Endothelial cell of umbilical vein (primary cell): ENCODE measurements at regions of chr15 and their contacts with region 1.

Region 1: GRCh38 chr15:65028921-65029735 is at the start of gene MTFMT:
- DNase-seq: peak; percentile 80
- H3K4me3 ChIP-seq: peak within 1 kb of the TSS; percentile 70 to 81 (median 73)
- H3K27ac ChIP-seq: peak within 1 kb of the TSS; percentile 16
- H3K4me1 ChIP-seq: peaks cover 8% of the 10 kb centered on the region
- H3K27me3 ChIP-seq: no peaks in the 10 kb centered on the region
- CTCF ChIP-seq: no peak
- POLR2A ChIP-seq: peak; percentile 96
- total RNA-seq, gene MTFMT: 13.6 and 20.4 TPM in 2 replicates

Region 2: GRCh38 chr15:64895285-64896065 is 133.7 kb before region 1 on chr15:
- CTCF ChIA-PET with region 1: no interaction called
- POLR2A ChIA-PET with region 1: no interaction called
- dilution Hi-C with region 1: no loop called
- intact Hi-C with region 1: no loop called
- DNase-seq: peak; percentile 53
- H3K4me3 ChIP-seq: no peak overlapping the region
- H3K27ac ChIP-seq: peak overlapping the region; percentile 32
- H3K4me1 ChIP-seq: peaks cover 44% of the 10 kb centered on the region
- H3K27me3 ChIP-seq: no peaks in the 10 kb centered on the region
- CTCF ChIP-seq: no peak
- POLR2A ChIP-seq: no peak

Region 3: GRCh38 chr15:65008983-65009382 is 20.1 kb before region 1 on chr15:
- CTCF ChIA-PET with region 1: interaction called, 4 read pairs
- POLR2A ChIA-PET with region 1: interaction called, 13 read pairs
- dilution Hi-C with region 1: no loop called
- intact Hi-C with region 1: no loop called
- DNase-seq: no peak
- H3K4me3 ChIP-seq: no peak overlapping the region
- H3K27ac ChIP-seq: no peak overlapping the region
- H3K4me1 ChIP-seq: no peaks in the 10 kb centered on the region
- H3K27me3 ChIP-seq: no peaks in the 10 kb centered on the region
- CTCF ChIP-seq: no peak
- POLR2A ChIP-seq: no peak

Region 4: GRCh38 chr15:65049418-65049840 is 20.3 kb after region 1 on chr15:
- CTCF ChIA-PET with region 1: interaction called, 11 read pairs
- POLR2A ChIA-PET with region 1: no interaction called
- dilution Hi-C with region 1: no loop called
- intact Hi-C with region 1: loop called (anchors 2 kb)
- DNase-seq: peak; percentile 92
- H3K4me3 ChIP-seq: peak overlapping the region; percentile 2 to 35 (median 22)
- H3K27ac ChIP-seq: no peak overlapping the region
- H3K4me1 ChIP-seq: peaks cover 11% of the 10 kb centered on the region
- H3K27me3 ChIP-seq: no peaks in the 10 kb centered on the region
- CTCF ChIP-seq: no peak
- POLR2A ChIP-seq: no peak

Region 5: DNA sequence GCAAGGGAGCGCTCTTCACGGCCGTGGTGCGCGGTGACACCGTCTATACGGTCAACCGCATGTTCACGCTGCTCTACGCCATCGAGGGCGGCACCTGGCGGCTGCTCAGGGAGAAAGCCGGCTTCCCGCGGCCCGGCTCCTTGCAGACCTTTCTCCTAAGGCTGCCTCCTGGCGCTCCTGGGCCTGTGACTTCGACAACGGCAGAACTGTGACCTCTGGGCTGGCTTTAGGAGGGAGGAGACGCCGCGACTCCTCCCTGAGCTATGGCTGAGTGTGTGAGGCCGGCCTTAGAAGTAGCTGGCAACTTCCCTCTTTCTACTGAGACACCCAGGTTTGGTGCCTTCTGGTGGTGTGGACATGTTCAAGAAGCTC is 48.8 kb after region 1 on chr15:
- CTCF ChIA-PET with region 1: interaction called, 65 read pairs
- POLR2A ChIA-PET with region 1: no interaction called
- dilution Hi-C with region 1: no loop called
- intact Hi-C with region 1: loop called (anchors 1 kb)
- DNase-seq: peak; percentile 58
- H3K4me3 ChIP-seq: no peak overlapping the region
- H3K27ac ChIP-seq: no peak overlapping the region
- H3K4me1 ChIP-seq: no peaks in the 10 kb centered on the region
- H3K27me3 ChIP-seq: peaks cover 34 to 35% of the 10 kb centered on the region in 2 experiments
- CTCF ChIP-seq: peak; percentile 60 to 85
- POLR2A ChIP-seq: no peak

Region 6: DNA sequence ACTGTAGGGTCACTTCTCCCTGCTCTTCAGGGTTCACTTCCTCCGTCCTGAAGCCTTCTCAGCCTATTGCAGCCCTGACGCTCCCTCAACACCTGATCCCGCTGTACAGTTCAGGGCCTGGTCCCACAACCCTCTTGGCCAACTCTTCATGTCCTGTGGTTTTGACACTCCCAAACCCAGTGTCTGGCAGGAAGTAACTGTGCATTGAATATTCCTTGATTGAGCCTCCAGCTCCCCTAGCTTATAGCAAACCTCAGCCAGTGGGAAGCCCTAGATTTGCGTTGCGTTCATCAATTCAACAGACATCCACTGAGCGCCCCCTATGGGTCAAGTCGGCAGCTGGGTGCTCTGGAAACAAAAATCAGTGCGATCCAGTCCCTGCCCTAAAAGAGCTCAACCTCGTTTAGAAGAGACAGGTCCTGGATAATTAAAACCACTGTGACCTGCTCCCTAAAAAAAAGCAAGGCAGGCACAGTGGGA is 72.3 kb after region 1 on chr15:
- CTCF ChIA-PET with region 1: interaction called, 29 read pairs
- POLR2A ChIA-PET with region 1: no interaction called
- dilution Hi-C with region 1: no loop called
- intact Hi-C with region 1: no loop called
- DNase-seq: peak; percentile 53
- H3K4me3 ChIP-seq: peak overlapping the region in 1 of 3 experiments; percentile 13
- H3K27ac ChIP-seq: no peak overlapping the region
- H3K4me1 ChIP-seq: peaks cover 2% of the 10 kb centered on the region
- H3K27me3 ChIP-seq: no peaks in the 10 kb centered on the region
- CTCF ChIP-seq: peak; percentile 82 to 87
- POLR2A ChIP-seq: no peak